ENCODE measurements at regions of chr1 and their contacts with region 1.

Region 1: GRCh38 chr1:172719694-172720138 is 60.8 kb downstream of the FASLG start:
- DNase-seq: no peak
- H3K4me3 Mint-ChIP-seq: peak overlapping the region; percentile 6
- H3K27ac Mint-ChIP-seq: peak overlapping the region; percentile 73
- H3K4me1 Mint-ChIP-seq: peaks cover 49% of the 10 kb centered on the region
- H3K27me3 Mint-ChIP-seq: no peaks in the 10 kb centered on the region

Region 2: DNA sequence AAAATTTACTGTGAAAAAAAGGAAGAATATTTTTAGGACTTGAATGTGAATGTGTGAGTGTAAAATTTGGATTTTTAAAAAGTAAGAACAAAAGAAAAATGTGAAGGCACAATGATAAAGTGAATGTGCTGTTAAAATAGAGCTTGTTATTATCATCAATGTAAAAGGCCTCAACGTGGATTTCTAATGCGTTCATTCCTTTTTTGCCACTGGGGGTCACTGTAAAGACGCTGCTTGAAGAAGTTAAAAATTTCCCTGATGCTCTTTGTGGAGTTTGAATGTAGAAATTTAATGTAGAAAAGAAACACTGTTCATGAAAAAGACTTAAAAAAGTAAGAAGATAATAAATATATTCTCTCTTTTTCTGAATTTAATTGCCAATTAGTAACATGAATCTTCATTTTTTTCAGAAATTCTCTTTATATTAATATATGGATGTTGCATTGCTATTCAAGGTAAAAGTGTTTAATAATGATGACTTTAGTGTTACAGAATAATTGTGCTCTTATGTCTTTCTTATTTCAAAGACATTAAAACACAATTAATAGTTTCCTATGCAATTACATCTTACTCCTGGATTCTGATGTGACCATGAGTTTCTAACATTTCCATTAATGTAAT is 716.9 kb before region 1 on chr1:
- intact Hi-C with region 1: loop called (anchors 10 kb)
- DNase-seq: no peak
- H3K4me3 Mint-ChIP-seq: no peak overlapping the region
- H3K27ac Mint-ChIP-seq: no peak overlapping the region
- H3K4me1 Mint-ChIP-seq: no peaks in the 10 kb centered on the region
- H3K27me3 Mint-ChIP-seq: no peaks in the 10 kb centered on the region

Region 3: GRCh38 chr1:172449585-172450534 is 269.9 kb before region 1 on chr1:
- intact Hi-C with region 1: loop called (anchors 1 kb)
- DNase-seq: peak; percentile 30
- H3K4me3 Mint-ChIP-seq: peak overlapping the region; percentile 43
- H3K27ac Mint-ChIP-seq: no peak overlapping the region
- H3K4me1 Mint-ChIP-seq: peaks cover 40% of the 10 kb centered on the region
- H3K27me3 Mint-ChIP-seq: peaks cover 2% of the 10 kb centered on the region

Region 4: GRCh38 chr1:172609528-172609927 is 110.2 kb before region 1 on chr1:
- intact Hi-C with region 1: loop called (anchors 1 kb)
- DNase-seq: no peak
- H3K4me3 Mint-ChIP-seq: no peak overlapping the region
- H3K27ac Mint-ChIP-seq: no peak overlapping the region
- H3K4me1 Mint-ChIP-seq: peaks cover 24% of the 10 kb centered on the region
- H3K27me3 Mint-ChIP-seq: no peaks in the 10 kb centered on the region

Region 5: DNA sequence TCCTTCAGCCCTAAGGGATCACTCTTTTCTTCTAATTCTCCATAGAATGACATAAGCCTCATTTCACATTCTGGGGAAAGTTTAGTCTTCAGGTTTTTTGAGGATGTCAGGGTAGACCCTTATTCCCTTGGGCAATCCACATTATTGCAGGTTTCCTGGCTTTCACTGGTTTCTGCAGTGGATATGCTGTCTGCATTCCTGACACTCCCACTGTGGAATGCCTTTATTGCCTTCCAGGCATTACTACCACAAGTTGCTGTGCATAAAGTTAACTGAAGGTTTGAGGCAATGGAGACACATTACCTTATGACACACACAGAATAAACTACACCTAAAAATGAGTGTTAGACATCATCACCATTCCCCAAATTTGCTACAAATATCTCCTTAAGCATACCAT is 48.1 kb before region 1 on chr1:
- intact Hi-C with region 1: loop called (anchors 1 kb)
- DNase-seq: no peak
- H3K4me3 Mint-ChIP-seq: no peak overlapping the region
- H3K27ac Mint-ChIP-seq: peak overlapping the region; percentile 63
- H3K4me1 Mint-ChIP-seq: peaks cover 92% of the 10 kb centered on the region
- H3K27me3 Mint-ChIP-seq: no peaks in the 10 kb centered on the region

Region 6: GRCh38 chr1:172699111-172699510 is 20.6 kb before region 1 on chr1:
- intact Hi-C with region 1: loop called (anchors 1 kb)
- DNase-seq: peak; percentile 72
- H3K4me3 Mint-ChIP-seq: peak overlapping the region; percentile 62
- H3K27ac Mint-ChIP-seq: peak overlapping the region; percentile 88
- H3K4me1 Mint-ChIP-seq: no peaks in the 10 kb centered on the region
- H3K27me3 Mint-ChIP-seq: no peaks in the 10 kb centered on the region

Region 7: GRCh38 chr1:172708452-172708851 is 11.3 kb before region 1 on chr1:
- intact Hi-C with region 1: loop called (anchors 1 kb)
- DNase-seq: peak; percentile 53
- H3K4me3 Mint-ChIP-seq: peak overlapping the region; percentile 50
- H3K27ac Mint-ChIP-seq: peak overlapping the region; percentile 86
- H3K4me1 Mint-ChIP-seq: peaks cover 18% of the 10 kb centered on the region
- H3K27me3 Mint-ChIP-seq: no peaks in the 10 kb centered on the region

Region 8: DNA sequence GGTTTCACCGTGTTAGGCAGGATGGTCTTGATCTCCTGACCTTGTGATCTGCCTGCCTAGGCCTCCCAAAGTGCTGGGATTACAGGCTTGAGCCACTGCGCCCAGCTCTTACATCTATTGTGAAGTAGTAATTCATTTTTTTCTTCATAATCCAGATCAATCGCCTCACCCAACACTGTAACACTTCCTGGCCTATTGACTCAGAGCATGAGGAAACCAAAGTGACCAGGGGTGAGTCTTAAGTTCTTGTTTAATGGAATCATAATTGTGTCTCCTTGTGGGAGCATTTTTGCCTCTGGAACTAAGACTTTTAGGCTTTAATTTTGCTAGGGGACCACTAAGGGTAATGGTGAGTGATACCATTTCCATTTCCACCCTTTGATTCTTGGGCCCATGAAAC is 303.6 kb after region 1 on chr1:
- intact Hi-C with region 1: no loop called
- DNase-seq: no peak
- H3K4me3 Mint-ChIP-seq: no peak overlapping the region
- H3K27ac Mint-ChIP-seq: no peak overlapping the region
- H3K4me1 Mint-ChIP-seq: no peaks in the 10 kb centered on the region
- H3K27me3 Mint-ChIP-seq: no peaks in the 10 kb centered on the region

Measured in activated T-helper 1 cell treated with anti-CD3 and anti-CD28 coated beads, Interleukin-12 subunit alpha, Interleukin-12 subunit beta, Interleukin-2, Interleukin-4 antibody, amounts not matched to agents 30 ng/mL and 10 ng/mL and 1 ng/mL, durations not matched to agents 14 hours and 24 hours and 36 hours (primary cell).